ENCODE measurements at regions of chr20 and their contacts with region 1.

Region 1: DNA sequence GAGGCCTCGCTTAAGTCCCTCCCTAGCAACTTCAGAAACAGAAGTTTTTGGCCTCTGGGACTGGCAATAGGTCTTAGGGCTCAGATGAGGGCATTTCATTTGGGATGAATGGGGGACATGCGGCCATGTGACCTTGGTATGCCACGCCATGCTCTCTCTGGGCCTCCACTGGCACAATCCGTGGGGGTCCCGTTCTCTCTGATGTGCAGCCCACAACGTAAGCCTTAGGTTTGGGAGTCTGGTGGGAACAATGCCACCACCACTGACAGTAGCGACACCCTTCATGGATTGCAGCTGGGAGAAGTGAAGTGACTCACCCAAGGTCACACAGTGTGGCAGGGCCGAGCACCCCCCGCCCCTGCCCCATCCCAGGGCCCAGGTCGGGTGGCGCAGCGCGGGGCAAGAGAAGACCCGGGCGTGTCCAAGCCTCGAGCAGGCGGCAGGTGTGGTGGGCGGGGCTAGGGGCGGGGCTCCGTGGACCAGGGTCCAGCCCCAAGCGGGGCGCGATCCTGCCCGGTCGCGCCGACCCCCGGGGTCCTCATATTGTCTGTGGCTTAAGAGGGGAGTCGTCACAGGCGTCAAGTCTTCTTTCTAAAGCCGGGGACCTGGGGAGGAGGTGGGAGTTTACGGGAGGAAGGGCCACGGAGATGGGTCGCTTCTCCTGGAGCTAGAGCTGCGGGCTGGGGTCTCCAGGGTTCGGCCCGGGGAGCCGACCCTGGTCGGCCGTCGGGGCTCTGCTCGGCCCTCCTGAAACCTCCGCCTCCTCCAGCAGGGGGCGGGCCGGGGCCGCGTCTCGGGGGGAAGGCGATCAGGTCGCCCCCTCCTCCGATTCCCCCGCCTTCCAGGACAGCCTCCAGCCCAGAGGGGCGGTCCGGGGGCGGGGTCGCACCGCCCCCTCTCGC is 698 bp upstream of the CEBPB start:
- DNase-seq: peak; percentile 88
- H3K4me3 Mint-ChIP-seq: peak overlapping the region; percentile 47
- H3K27ac Mint-ChIP-seq: peak overlapping the region; percentile 50
- H3K4me1 Mint-ChIP-seq: peaks cover 25% of the 10 kb centered on the region
- H3K27me3 Mint-ChIP-seq: peaks cover 11% of the 10 kb centered on the region

Region 2: DNA sequence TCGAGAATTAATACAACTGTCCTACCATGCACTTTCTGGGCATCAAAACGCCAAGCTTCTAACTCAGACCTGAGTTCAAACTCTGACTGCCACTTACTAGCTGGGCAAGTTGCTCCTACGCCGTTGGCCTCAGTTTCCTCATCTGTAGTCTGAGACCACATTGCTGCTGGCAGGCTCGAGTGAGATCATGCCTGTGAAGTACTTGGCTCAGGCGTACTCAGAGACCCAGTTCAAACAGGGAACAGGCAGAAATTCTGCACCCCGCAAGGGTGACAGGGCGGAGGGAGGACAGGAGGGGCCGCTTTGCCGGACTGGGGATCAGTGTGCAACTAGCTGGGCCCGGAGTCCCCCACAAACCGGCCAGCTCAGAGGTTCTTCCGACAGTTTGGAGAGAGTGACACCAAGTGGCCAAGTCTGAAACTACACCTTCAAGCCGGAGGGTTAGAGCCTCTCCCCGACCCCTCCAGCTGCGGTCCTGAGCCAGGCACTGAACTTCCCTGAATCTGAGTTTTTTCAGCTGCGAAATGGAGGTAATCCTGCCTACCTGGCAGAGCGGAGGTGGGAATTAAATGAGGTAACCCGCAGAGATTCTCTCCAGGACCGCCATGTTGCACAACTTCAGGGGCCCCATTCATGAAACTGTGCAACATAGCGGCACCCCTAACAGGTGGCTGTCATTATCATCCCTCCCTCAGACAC is 274.2 kb after region 1 on chr20:
- CTCF ChIA-PET with region 1: interaction called, 27 read pairs
- POLR2A ChIA-PET with region 1: no interaction called
- DNase-seq: peak; percentile 57
- H3K4me3 Mint-ChIP-seq: no peak overlapping the region
- H3K27ac Mint-ChIP-seq: no peak overlapping the region
- H3K4me1 Mint-ChIP-seq: peaks cover 17% of the 10 kb centered on the region
- H3K27me3 Mint-ChIP-seq: peaks cover 4% of the 10 kb centered on the region